ENCODE measurements at regions of chr6 and their contacts with region 1.

Region 1: DNA sequence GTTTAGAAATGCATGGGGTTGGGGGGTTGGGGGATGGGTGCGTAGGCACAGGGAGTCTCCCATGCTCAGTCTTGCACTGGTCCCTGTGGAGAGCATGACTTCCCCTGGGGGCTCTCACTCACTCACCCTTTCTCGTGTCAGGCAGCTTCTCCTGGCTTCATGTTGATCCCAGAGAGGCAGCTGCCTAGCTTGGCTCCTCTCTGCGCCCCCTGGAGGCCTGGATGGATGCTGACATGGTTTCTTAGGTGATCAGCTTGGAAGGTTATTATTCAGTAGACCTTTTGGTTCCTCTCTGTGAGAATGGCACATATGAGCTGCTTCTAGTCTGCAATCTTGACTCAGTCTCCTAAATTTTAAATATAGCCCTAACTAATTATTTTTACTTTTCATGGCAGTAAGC is 109.3 kb upstream of the FAM83B start:
- DNase-seq: peak; percentile 9
- ATAC-seq: no peak
- H3K4me3 Mint-ChIP-seq: no peak overlapping the region
- H3K27ac Mint-ChIP-seq: no peak overlapping the region
- H3K4me1 Mint-ChIP-seq: no peaks in the 10 kb centered on the region
- H3K27me3 Mint-ChIP-seq: no peaks in the 10 kb centered on the region
- CTCF ChIP-seq: peak; percentile 19

Region 2: GRCh38 chr6:54717849-54718455 is 19.3 kb before region 1 on chr6:
- CTCF ChIA-PET with region 1: interaction called, 15 read pairs
- POLR2A ChIA-PET with region 1: no interaction called
- intact Hi-C with region 1: no loop called
- DNase-seq: peak; percentile 80
- ATAC-seq: peak; percentile 71
- H3K4me3 Mint-ChIP-seq: no peak overlapping the region
- H3K27ac Mint-ChIP-seq: no peak overlapping the region
- H3K4me1 Mint-ChIP-seq: no peaks in the 10 kb centered on the region
- H3K27me3 Mint-ChIP-seq: no peaks in the 10 kb centered on the region
- CTCF ChIP-seq: peak; percentile 88

Measured in activated CD8-positive, alpha-beta T cell treated with anti-CD3 and anti-CD28 coated beads for 36 hours (primary cell).